MCF 10A (cell line): ENCODE measurements at regions of chr15 and their contacts with region 1.

Region 1: DNA sequence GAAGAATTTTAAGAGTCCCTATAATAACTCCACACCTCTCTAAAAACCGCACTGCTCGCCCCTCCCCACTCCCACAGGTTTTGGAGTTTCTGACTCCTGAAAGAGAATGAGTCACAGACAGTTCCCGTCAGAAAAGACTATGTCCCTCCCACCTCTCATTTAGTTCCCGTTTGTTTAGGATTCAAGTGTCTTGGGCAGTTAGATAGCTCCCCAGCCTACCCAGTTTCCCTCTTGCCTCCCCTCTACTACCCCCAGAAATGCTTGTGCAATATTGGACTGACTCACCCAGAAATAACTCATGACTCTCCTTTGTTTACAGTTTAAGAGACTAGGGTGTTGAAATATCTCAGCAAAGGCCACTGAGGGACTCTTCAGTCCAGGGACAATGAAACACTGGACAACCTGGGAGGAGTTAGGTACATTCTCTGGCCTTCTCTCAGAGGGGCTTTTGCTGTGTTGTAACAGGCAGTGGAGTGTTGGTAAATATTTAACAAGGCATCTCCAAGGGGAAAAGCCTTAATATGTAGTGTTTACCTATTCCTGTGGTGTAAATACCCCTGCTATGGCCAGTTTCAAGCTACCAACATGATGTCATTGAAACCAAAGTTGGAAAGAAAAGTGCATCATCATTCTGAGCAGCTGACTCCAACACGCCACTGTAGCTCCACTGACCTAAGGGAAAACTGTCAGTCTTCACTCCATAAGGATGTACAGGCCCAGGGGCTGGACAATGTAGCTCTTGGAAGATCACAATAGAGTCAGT is 96.1 kb upstream of the CHD2 start:
- DNase-seq: peak; percentile 100
- H3K4me3 Mint-ChIP-seq: peak overlapping the region; percentile 1
- H3K27ac Mint-ChIP-seq: peak overlapping the region; percentile 98
- H3K4me1 Mint-ChIP-seq: peaks cover 34% of the 10 kb centered on the region
- H3K27me3 Mint-ChIP-seq: no peaks in the 10 kb centered on the region
- CTCF ChIP-seq: no peak

Region 2: GRCh38 chr15:92521624-92522008 is 282.4 kb before region 1 on chr15:
- CTCF ChIA-PET with region 1: no interaction called
- POLR2A ChIA-PET with region 1: interaction called, 3 read pairs
- intact Hi-C with region 1: loop called (anchors 5 kb)
- DNase-seq: peak; percentile 77
- H3K4me3 Mint-ChIP-seq: no peak overlapping the region
- H3K27ac Mint-ChIP-seq: no peak overlapping the region
- H3K4me1 Mint-ChIP-seq: peaks cover 6% of the 10 kb centered on the region
- H3K27me3 Mint-ChIP-seq: peaks cover 11% of the 10 kb centered on the region
- CTCF ChIP-seq: peak; percentile 59

Region 3: GRCh38 chr15:93164409-93164808 is 360.4 kb after region 1 on chr15:
- CTCF ChIA-PET with region 1: no interaction called
- POLR2A ChIA-PET with region 1: no interaction called
- intact Hi-C with region 1: no loop called
- DNase-seq: no peak
- H3K4me3 Mint-ChIP-seq: no peak overlapping the region
- H3K27ac Mint-ChIP-seq: no peak overlapping the region
- H3K4me1 Mint-ChIP-seq: peaks cover 9% of the 10 kb centered on the region
- H3K27me3 Mint-ChIP-seq: peaks cover 18% of the 10 kb centered on the region
- CTCF ChIP-seq: no peak